ENCODE measurements at regions of chr15 and their contacts with region 1.

Region 1: DNA sequence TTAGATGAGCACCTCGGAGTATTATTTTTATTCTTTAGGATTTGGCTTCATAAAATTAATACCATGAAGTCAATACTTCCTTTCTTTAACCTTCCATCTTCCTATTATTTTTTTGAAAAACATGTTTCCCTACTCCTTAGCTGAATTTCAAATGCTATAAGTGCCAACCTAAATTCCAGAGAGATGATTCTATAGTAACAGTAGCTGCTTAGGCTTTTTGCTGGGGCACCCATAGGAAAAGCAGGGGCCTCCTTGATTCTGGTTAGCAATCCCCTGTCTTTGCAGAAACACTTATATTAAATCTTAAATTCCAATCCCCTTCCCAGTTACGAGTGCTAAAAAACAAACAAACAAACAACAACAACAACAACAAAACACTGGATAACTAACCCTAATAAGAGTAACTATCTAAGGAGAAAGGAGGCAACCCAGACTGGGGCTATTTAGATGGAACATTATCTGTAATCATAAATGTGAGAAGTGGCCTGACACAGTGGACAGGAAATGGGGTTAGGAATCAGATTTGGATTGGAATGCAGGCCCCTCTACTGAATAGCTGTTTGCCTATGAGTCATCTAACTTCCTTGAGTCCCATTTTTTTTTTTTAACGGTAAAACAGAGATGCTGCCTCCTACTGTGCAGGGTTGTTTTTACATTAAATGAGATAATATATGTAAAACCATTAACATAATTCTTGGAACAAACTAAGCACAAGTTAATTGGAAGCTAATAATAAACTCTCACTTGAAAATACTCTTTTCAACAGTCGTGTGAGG is 148.1 kb downstream of the WDR72 start:
- DNase-seq: no peak
- H3K4me3 ChIP-seq: no peak overlapping the region
- H3K27ac ChIP-seq: no peak overlapping the region
- H3K4me1 ChIP-seq: no peaks in the 10 kb centered on the region
- H3K27me3 ChIP-seq: no peaks in the 10 kb centered on the region
- CTCF ChIP-seq: no peak

Region 2: GRCh38 chr15:51600114-51600513 is 2011.2 kb before region 1 on chr15:
- intact Hi-C with region 1: loop called (anchors 10 kb)
- DNase-seq: no peak
- H3K4me3 ChIP-seq: no peak overlapping the region
- H3K27ac ChIP-seq: no peak overlapping the region
- H3K4me1 ChIP-seq: no peaks in the 10 kb centered on the region
- H3K27me3 ChIP-seq: no peaks in the 10 kb centered on the region
- CTCF ChIP-seq: no peak

Region 3: GRCh38 chr15:53548236-53548635 is 63.1 kb before region 1 on chr15:
- intact Hi-C with region 1: no loop called
- DNase-seq: no peak
- H3K4me3 ChIP-seq: no peak overlapping the region
- H3K27ac ChIP-seq: no peak overlapping the region
- H3K4me1 ChIP-seq: no peaks in the 10 kb centered on the region
- H3K27me3 ChIP-seq: no peaks in the 10 kb centered on the region
- CTCF ChIP-seq: no peak

Region 4: GRCh38 chr15:53869044-53869805 is 257.9 kb after region 1 on chr15:
- intact Hi-C with region 1: no loop called
- DNase-seq: no peak
- H3K4me3 ChIP-seq: no peak overlapping the region
- H3K27ac ChIP-seq: no peak overlapping the region
- H3K4me1 ChIP-seq: no peaks in the 10 kb centered on the region
- H3K27me3 ChIP-seq: no peaks in the 10 kb centered on the region
- CTCF ChIP-seq: no peak

Measured in tibial artery (tissue), 4 donors.